ENCODE measurements at regions of chr18 and their contacts with region 1.

Region 1: GRCh38 chr18:610214-610903 is 13.6 kb downstream of the CLUL1 start:
- DNase-seq: no peak
- H3K4me3 ChIP-seq: no peak overlapping the region
- H3K27ac ChIP-seq: no peak overlapping the region
- H3K4me1 ChIP-seq: no peaks in the 10 kb centered on the region
- H3K27me3 ChIP-seq: no peaks in the 10 kb centered on the region

Region 2: DNA sequence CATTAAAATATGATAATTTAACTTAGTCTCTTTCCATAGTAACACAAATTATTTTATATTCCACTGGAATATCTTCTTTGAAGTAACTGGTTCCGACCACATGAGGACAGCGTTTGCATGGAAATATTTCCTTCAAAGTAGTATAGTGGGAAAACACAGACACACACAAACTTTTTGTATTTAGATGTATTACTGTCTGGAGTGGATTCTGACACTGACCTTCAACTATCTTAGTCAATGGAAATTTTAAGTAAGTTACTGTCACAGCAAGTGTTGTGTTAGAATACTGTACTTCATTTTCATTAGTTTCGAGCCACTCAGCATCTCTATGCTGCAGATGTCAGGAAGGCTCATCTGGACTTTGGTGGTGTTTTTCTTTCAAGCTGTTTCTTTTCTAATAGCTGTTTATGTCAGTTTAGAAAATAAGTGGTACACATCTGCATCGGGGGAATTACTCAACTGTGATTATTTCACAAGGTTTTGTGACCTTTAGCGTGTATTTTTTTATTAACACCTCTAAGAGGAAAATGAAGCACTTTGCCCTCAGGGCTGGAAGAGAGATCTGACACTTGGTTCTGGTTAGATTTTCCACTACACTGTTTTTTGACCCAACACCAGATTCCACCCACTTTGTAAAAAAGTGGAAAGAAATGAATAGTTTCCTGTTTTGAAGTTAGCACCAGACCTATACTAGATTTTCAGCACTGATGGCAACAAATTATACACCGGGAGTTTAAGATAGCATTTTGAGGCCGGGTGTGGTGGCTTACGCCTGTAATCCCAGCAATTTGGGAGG is 323.6 kb before region 1 on chr18:
- in situ Hi-C with region 1: loop called (anchors 5 kb)
- DNase-seq: peak; percentile 66
- H3K4me3 ChIP-seq: no peak overlapping the region
- H3K27ac ChIP-seq: no peak overlapping the region
- H3K4me1 ChIP-seq: no peaks in the 10 kb centered on the region
- H3K27me3 ChIP-seq: no peaks in the 10 kb centered on the region

Region 3: GRCh38 chr18:731185-731584 is 120.8 kb after region 1 on chr18:
- in situ Hi-C with region 1: no loop called
- DNase-seq: peak; percentile 45
- H3K4me3 ChIP-seq: no peak overlapping the region
- H3K27ac ChIP-seq: 0 out of 2 replicates have a peak overlapping the region, but pooled peaks have one; percentile 14
- H3K4me1 ChIP-seq: peaks cover 11% of the 10 kb centered on the region
- H3K27me3 ChIP-seq: no peaks in the 10 kb centered on the region

Region 4: GRCh38 chr18:2236232-2236631 is 1625.9 kb after region 1 on chr18:
- in situ Hi-C with region 1: no loop called
- DNase-seq: no peak
- H3K4me3 ChIP-seq: no peak overlapping the region
- H3K27ac ChIP-seq: no peak overlapping the region
- H3K4me1 ChIP-seq: peaks cover 15% of the 10 kb centered on the region
- H3K27me3 ChIP-seq: peaks cover 8% of the 10 kb centered on the region; the same call in 1 of the 2 replicates

Measured in GM23248 (cell line).